ENCODE measurements at regions of chr12 and their contacts with region 1.

Region 1: DNA sequence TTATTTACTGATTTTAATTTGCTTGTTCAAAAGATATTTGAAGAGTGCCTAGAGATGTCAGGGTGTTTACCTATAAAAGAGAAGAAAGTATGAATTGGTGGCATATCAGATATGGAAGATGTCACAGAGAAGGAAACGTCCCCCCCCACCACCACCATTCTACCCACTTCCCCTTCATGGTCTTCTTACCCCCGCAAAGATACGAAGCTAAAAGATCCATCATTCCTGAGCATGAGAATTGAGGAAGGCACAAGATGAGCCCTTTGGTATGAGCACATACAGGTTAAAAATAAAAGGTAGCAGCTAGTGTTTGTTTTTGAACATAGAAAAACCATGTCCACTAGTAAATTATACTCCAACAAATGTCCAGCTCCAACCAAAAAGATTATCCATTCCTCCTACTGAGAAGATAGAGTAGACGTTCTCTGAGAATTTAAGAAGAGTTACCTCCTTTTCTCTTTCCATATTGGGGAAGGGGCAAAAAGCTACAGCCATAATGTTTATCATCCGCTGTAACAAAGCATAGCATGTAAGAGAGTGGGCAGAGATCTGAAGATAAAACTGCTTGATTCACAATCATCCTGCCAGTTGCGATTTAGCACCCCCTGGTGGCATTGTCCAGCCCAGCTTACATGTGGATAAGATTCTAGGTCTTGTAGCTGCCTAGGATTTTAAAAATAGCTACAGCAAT is 29.1 kb downstream of the NFYB start:
- DNase-seq: peak; percentile 85

Region 2: GRCh38 chr12:103884316-103884715 is 224.6 kb before region 1 on chr12:
- intact Hi-C with region 1: loop called (anchors 10 kb)
- DNase-seq: no peak

Region 3: DNA sequence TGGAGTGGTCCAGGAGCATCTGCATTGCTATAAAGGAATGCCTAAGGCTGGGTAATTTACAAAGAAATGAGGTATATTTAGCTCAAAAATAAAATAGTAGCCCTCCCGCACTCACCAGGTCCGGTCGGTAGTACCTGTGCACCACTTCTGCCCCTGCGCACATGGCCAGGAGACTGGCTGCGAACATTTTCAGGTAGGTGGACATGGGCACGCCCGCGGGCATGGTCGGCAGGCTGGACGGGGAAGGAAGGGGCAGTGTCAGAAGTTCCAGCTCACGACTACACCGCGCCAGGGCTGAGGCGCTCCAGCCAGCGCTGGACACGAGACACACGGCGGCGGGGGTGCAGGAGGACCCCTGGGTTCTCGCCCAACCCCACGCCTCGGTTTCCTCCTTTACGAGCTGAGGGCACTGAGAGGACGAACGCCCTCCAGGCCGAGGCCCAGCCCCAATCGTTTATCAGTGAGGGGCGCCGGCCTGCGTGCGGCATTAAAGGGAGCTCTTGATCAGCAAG is 152.3 kb before region 1 on chr12:
- intact Hi-C with region 1: loop called (anchors 5 kb)
- DNase-seq: peak; percentile 74

Region 4: DNA sequence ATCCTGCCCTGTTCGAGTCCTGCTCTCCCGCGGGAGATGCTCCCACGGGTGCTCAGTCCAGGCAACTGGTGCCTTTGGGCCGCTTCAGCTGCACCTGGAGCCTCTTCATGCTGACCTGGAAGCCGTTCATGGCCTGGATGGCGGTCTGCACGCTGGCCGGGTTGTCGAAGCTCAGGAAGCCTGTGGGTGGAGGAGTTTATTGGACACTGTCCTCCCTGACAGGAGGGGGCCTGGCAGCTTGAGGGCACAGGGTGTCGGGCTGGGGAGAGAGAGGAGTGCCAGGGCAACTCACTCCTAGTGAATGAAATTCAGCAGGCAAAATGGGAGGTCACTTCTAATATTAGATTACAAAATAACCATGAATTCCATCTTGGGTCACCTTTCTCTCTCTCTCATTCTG is 38.4 kb after region 1 on chr12:
- intact Hi-C with region 1: no loop called
- DNase-seq: no peak